ENCODE measurements at regions of chr1 and their contacts with region 1.

Region 1: GRCh38 chr1:19468397-19468956 is 16.9 kb downstream of the CAPZB start:
- DNase-seq: peak; percentile 82
- ATAC-seq: peak; percentile 81
- H3K4me3 Mint-ChIP-seq: peak overlapping the region; percentile 56
- H3K27ac Mint-ChIP-seq: peak overlapping the region; percentile 88
- H3K4me1 Mint-ChIP-seq: peaks cover 91% of the 10 kb centered on the region
- H3K27me3 Mint-ChIP-seq: no peaks in the 10 kb centered on the region

Region 2: DNA sequence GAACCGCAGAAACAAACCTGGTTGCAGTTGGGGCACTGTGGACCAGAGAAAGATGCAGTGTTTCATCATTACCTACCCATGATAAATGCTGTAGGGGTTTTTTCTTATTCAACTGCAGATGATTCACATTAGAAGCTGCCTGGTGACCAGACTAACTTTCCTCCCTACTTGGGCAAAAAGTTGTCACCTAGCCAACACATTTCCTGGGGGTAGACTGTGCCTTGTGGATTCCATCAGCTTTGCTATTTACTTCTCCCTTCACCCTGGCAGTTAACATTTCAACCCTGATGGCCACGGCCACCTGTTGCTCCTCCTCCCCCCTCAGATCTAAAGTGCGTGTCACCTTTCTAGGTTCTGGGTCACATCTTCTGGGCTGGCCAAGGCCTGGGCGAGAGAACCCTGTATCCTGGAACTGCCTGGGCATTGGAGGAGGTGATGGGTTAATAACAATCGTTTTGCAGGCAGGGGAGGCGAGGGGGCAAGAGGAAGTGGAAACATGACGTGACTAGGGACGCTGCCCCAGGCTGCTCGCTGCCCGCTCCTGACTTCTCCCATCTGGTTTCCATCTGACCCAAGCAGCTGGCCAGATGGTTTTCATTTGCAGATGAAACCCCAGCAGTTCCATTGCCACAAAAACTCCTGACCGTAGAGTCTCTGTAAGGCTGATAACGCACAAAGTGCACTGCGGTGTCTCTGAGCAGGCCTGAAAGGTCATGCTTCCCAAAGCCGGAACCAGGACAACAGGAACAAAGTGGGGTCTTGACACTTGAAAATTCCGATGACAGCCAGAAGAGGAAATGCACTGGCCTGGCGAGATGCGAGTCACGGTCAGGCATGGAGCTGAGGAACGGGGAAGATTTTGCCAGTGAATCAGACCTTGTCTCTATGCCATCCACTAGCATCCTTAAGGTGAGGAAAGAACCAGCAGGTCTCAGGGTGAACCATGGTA is 19.7 kb before region 1 on chr1:
- CTCF ChIA-PET with region 1: interaction called, 6 read pairs
- POLR2A ChIA-PET with region 1: interaction called, 3 read pairs
- intact Hi-C with region 1: loop called in 1 of 2 experiments (anchors 2 kb)
- DNase-seq: peak; percentile 65
- ATAC-seq: peak; percentile 77
- H3K4me3 Mint-ChIP-seq: peak overlapping the region; percentile 6
- H3K27ac Mint-ChIP-seq: peak overlapping the region; percentile 92
- H3K4me1 Mint-ChIP-seq: peaks cover 91% of the 10 kb centered on the region
- H3K27me3 Mint-ChIP-seq: no peaks in the 10 kb centered on the region

Region 3: DNA sequence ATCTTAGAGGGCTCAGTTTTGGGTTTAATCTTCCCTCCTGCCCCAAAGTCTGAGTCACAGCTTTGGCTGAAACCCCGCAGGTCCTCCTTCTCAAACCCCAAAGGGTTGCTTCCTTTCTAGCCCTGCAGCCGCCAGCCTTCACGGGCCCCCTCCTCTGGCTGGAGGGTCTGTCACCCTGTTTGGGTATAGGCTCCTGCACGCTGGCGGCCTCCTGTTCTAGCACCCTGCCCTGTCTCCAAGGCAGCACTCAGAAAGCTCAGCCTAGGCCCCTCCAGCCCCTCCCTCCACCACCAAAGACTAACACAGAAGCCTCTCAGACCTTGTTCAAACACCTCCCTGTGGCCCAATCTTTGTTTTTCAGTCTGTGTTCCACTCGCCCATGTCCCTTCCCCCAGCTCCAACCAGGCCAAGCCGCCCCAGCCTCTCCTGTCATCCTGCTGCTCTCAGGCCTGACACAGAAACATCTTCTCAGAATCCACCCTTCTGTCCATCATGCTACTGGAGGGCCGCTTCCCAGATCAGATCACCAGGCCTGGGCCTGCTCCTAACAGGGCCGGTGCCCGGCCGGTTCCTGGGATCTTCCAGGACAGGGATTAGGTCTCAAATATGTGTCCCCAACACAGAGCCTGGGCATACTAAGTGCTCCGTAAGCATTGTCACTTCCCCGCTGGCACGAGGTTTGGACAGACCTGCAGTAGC is 231.8 kb after region 1 on chr1:
- CTCF ChIA-PET with region 1: no interaction called
- POLR2A ChIA-PET with region 1: no interaction called
- intact Hi-C with region 1: no loop called
- DNase-seq: no peak
- ATAC-seq: no peak
- H3K4me3 Mint-ChIP-seq: no peak overlapping the region
- H3K27ac Mint-ChIP-seq: no peak overlapping the region
- H3K4me1 Mint-ChIP-seq: peaks cover 10% of the 10 kb centered on the region
- H3K27me3 Mint-ChIP-seq: no peaks in the 10 kb centered on the region